ENCODE measurements at regions of chr1 and their contacts with region 1.

Region 1: DNA sequence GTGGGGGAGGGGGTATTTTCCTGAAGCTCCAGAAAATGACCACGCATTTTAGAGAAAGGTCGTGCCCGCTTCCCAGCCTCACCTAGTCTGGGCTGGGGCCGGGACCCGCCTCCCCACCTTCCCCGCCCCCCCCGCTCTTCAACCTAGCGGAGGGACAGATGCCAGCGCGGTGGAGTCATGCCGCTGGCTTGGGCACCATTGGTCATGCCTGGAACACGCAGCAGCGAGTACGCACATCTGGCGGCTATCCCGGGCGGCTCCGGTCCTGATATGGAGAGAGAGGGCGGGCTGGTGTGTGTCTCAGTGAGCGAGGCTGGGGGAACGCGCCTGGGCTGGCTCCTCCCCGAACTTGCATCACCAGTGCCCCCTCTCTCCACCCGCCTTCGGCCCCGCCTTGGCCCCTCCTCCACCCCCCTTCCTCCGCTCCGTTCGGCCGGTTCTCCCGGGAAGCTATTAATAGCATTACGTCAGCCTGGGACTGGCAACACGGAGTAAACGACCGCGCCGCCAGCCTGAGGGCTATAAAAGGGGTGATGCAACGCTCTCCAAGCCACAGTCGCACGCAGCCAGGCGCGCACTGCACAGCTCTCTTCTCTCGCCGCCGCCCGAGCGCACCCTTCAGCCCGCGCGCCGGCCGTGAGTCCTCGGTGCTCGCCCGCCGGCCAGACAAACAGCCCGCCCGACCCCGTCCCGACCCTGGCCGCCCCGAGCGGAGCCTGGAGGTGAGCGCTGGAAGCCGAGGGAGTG is at the start of gene ATF3:
- DNase-seq: peak; percentile 100
- ATAC-seq: peak; percentile 76
- H3K4me3 ChIP-seq: peak within 1 kb of the TSS; percentile 83
- H3K27ac ChIP-seq: peak within 1 kb of the TSS; percentile 56
- H3K4me1 ChIP-seq: peaks cover 37% of the 10 kb centered on the region
- H3K27me3 ChIP-seq: peaks cover 40% of the 10 kb centered on the region
- CTCF ChIP-seq: no peak
- total RNA-seq, gene ATF3: 275 and 335 TPM in 2 replicates

Region 2: GRCh38 chr1:211910913-211911485 is 697.4 kb before region 1 on chr1:
- CTCF ChIA-PET with region 1: no interaction called
- POLR2A ChIA-PET with region 1: interaction called, 10 read pairs
- intact Hi-C with region 1: no loop called
- DNase-seq: no peak
- ATAC-seq: no peak
- H3K4me3 ChIP-seq: no peak overlapping the region
- H3K27ac ChIP-seq: no peak overlapping the region
- H3K4me1 ChIP-seq: peaks cover 18% of the 10 kb centered on the region
- H3K27me3 ChIP-seq: peaks cover 75% of the 10 kb centered on the region
- CTCF ChIP-seq: no peak

Region 3: DNA sequence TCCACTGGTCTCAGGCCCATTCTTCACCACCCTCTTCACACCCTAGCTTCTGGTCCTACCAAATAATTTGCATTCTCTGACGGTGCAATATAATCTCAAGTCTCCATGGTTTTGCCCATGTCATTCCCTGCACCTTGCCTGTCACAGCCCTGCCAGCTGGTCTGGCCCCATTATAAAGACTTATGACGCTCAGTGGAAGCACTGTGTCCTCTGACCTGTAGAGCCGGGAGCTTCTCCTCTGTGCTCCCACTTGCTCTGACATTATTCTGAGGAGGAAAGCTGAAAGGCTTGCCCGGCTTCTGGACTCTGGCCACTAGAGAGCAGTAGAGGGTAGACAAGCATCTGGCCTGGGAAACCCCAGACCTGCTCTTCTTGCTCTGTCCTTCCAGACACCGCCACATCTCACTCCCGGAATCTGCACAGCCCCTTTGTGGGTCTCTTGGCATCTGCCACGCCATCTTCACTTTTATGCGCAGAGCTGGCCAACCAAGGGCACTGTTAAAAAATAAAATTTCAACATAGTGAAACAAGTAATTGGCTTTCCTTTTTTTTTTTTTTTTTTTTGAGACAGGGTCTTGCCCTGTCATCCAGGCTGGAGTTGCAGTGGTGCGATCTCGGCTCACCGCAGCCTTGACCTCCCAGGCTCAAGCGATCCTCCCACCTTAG is 131.2 kb before region 1 on chr1:
- CTCF ChIA-PET with region 1: interaction called, 6 read pairs
- POLR2A ChIA-PET with region 1: interaction called, 14 read pairs
- intact Hi-C with region 1: loop called (anchors 1 kb)
- DNase-seq: peak; percentile 99
- ATAC-seq: peak; percentile 96
- H3K4me3 ChIP-seq: no peak overlapping the region
- H3K27ac ChIP-seq: 0 out of 2 replicates have a peak overlapping the region, but pooled peaks have one; percentile 3
- H3K4me1 ChIP-seq: peaks cover 19% of the 10 kb centered on the region
- H3K27me3 ChIP-seq: no peaks in the 10 kb centered on the region
- CTCF ChIP-seq: peak; percentile 99

Region 4: GRCh38 chr1:212498283-212499040 is 109.9 kb before region 1 on chr1:
- CTCF ChIA-PET with region 1: no interaction called
- POLR2A ChIA-PET with region 1: no interaction called
- intact Hi-C with region 1: no loop called
- DNase-seq: peak; percentile 83
- ATAC-seq: peak; percentile 59
- H3K4me3 ChIP-seq: no peak overlapping the region
- H3K27ac ChIP-seq: 0 out of 2 replicates have a peak overlapping the region, but pooled peaks have one; percentile 3
- H3K4me1 ChIP-seq: peaks cover 12% of the 10 kb centered on the region; the same call in 1 of the 2 replicates
- H3K27me3 ChIP-seq: no peaks in the 10 kb centered on the region
- CTCF ChIP-seq: no peak

Region 5: GRCh38 chr1:212566522-212567479 is 41.6 kb before region 1 on chr1:
- CTCF ChIA-PET with region 1: interaction called, 6 read pairs
- POLR2A ChIA-PET with region 1: interaction called, 13 read pairs
- intact Hi-C with region 1: no loop called
- DNase-seq: peak; percentile 81
- ATAC-seq: peak; percentile 91
- H3K4me3 ChIP-seq: peak overlapping the region; percentile 67
- H3K27ac ChIP-seq: peak overlapping the region; percentile 30
- H3K4me1 ChIP-seq: peaks cover 21% of the 10 kb centered on the region
- H3K27me3 ChIP-seq: no peaks in the 10 kb centered on the region
- CTCF ChIP-seq: no peak

Region 6: DNA sequence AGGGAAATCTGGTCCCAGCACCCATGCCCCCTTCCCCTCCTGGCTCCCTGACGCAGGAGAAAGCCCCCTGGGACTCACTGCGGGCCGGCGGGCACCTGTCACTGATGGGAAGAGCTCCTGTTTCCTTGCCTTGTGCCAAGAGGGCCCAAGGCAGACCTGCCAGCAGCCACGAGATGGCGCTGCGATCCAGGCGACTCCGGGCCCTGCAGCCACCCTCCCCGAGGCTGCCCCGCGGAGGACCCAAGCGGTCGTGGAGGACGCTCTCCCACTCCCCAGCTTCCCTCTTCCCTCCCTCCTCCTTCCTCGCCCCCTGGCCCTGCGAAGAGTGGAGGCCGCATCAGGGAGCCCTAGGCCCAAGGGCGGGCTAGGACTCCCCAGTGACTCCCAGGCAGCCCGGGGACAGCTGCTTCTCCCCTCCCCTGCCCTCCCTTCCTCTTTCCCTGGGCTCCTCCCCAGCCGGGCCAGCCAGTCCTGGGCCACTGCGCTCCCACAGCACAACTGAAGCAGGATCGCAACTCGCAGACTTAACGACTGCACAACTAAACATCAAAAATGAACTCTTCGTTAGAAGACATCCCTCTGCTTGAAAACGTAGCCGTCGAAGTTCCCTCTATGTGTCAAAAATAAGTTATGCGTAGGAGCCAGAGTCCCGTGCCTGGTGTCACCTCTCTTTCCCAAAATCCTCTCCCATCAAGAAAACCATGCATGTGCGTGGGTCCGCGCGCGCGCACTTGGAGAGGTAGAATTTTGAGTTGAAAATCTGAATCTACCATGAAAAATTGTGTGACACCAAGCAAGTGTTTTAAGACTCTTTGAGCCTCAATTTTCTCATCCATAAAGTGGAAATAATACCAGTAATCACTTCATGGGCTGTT is 57.1 kb after region 1 on chr1:
- CTCF ChIA-PET with region 1: interaction called, 4 read pairs
- POLR2A ChIA-PET with region 1: interaction called, 7 read pairs
- intact Hi-C with region 1: loop called (anchors 2 kb)
- DNase-seq: peak; percentile 95
- ATAC-seq: peak; percentile 88
- H3K4me3 ChIP-seq: peak overlapping the region; percentile 72
- H3K27ac ChIP-seq: no peak overlapping the region; the same call in 1 of the 2 replicates
- H3K4me1 ChIP-seq: peaks cover 35% of the 10 kb centered on the region
- H3K27me3 ChIP-seq: no peaks in the 10 kb centered on the region
- CTCF ChIP-seq: peak; percentile 99

Region 7: GRCh38 chr1:213070406-213070805 is 462.0 kb after region 1 on chr1:
- CTCF ChIA-PET with region 1: no interaction called
- POLR2A ChIA-PET with region 1: interaction called, 6 read pairs
- intact Hi-C with region 1: loop called (anchors 5 kb)
- DNase-seq: peak; percentile 75
- ATAC-seq: peak; percentile 96
- H3K4me3 ChIP-seq: no peak overlapping the region
- H3K27ac ChIP-seq: no peak overlapping the region
- H3K4me1 ChIP-seq: peaks cover 4% of the 10 kb centered on the region; the same call in 1 of the 2 replicates
- H3K27me3 ChIP-seq: no peaks in the 10 kb centered on the region
- CTCF ChIP-seq: peak; percentile 61